Activated T-helper 2 cell treated with anti-CD3 and anti-CD28 coated beads, Interferon-gamma antibody, Interleukin-2, Interleukin-4, amounts not matched to agents 10 μg/mL and 5 μg/mL and 100 μg/mL, durations not matched to agents 14 hours and 24 hours and 36 hours (primary cell): ENCODE measurements at regions of chr11 and their contacts with region 1.

Region 1: GRCh38 chr11:122853971-122854446 is 15.7 kb downstream of the CRTAM start:
- DNase-seq: no peak
- H3K4me3 Mint-ChIP-seq: no peak overlapping the region
- H3K27ac Mint-ChIP-seq: no peak overlapping the region
- H3K4me1 Mint-ChIP-seq: peaks cover 52% of the 10 kb centered on the region
- H3K27me3 Mint-ChIP-seq: peaks cover 5% of the 10 kb centered on the region

Region 2: GRCh38 chr11:122578168-122578825 is 275.7 kb before region 1 on chr11:
- intact Hi-C with region 1: loop called (anchors 1 kb)
- DNase-seq: no peak
- H3K4me3 Mint-ChIP-seq: no peak overlapping the region
- H3K27ac Mint-ChIP-seq: no peak overlapping the region
- H3K4me1 Mint-ChIP-seq: peaks cover 11% of the 10 kb centered on the region
- H3K27me3 Mint-ChIP-seq: no peaks in the 10 kb centered on the region

Region 3: DNA sequence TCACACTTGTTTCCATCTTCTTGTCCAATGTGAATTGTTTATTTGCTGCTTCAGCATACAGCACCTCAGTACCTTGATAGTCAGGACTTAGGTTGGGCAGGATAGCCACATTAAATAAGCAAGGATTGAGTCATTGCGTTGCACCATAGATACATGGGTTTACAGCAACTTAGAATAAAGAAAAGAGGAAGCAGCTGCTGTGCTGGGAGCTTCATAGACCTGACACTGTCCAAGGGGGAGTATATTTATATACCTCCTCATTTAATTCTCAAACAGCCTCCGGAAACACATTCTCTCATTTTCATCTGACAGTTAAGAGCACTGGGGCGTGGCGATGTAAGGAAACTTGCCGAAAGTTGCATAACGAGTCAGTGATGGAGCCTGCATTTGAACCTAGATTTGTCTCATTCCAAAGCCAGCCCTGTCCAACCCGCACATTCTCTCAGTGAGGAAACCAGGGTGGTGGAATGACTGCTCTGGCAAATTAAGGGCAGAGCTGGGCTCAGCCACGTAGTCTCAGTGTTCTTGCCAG is 156.3 kb before region 1 on chr11:
- intact Hi-C with region 1: loop called (anchors 1 kb)
- DNase-seq: peak; percentile 38
- H3K4me3 Mint-ChIP-seq: peak overlapping the region; percentile 68
- H3K27ac Mint-ChIP-seq: peak overlapping the region; percentile 88
- H3K4me1 Mint-ChIP-seq: peaks cover 53% of the 10 kb centered on the region
- H3K27me3 Mint-ChIP-seq: no peaks in the 10 kb centered on the region

Region 4: GRCh38 chr11:122743949-122744348 is 110.1 kb before region 1 on chr11:
- intact Hi-C with region 1: loop called (anchors 1 kb)
- DNase-seq: peak; percentile 75
- H3K4me3 Mint-ChIP-seq: no peak overlapping the region
- H3K27ac Mint-ChIP-seq: no peak overlapping the region
- H3K4me1 Mint-ChIP-seq: peaks cover 40% of the 10 kb centered on the region
- H3K27me3 Mint-ChIP-seq: peaks cover 10% of the 10 kb centered on the region

Region 5: DNA sequence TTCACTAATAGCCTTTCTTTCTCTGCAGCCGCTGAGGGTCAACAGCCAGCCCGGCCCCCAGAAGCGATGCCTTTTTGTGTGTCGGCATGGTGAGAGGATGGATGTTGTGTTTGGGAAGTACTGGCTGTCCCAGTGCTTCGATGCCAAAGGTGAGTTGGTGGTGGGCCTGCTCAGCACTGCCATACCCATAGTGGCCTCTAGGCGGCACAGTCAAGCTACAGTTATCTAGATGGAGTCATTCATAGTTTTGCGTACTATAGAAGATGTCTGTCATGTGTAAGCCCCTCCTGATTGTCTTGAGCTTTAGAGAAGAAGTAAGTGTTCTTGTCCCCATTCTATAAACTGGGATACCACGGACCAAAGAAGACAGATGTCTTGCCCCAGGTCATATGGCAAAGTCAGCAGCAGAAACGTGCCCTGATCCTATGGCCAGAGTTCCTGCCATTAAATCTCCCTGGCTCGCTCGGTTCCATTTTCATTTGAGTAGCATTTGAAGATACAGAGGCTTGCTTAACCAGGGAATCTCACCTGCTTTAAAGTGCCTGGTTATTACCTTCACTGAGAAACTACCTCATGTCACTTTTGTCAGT is 57.8 kb before region 1 on chr11:
- intact Hi-C with region 1: loop called (anchors 1 kb)
- DNase-seq: peak; percentile 39
- H3K4me3 Mint-ChIP-seq: no peak overlapping the region
- H3K27ac Mint-ChIP-seq: no peak overlapping the region
- H3K4me1 Mint-ChIP-seq: no peaks in the 10 kb centered on the region
- H3K27me3 Mint-ChIP-seq: no peaks in the 10 kb centered on the region

Region 6: DNA sequence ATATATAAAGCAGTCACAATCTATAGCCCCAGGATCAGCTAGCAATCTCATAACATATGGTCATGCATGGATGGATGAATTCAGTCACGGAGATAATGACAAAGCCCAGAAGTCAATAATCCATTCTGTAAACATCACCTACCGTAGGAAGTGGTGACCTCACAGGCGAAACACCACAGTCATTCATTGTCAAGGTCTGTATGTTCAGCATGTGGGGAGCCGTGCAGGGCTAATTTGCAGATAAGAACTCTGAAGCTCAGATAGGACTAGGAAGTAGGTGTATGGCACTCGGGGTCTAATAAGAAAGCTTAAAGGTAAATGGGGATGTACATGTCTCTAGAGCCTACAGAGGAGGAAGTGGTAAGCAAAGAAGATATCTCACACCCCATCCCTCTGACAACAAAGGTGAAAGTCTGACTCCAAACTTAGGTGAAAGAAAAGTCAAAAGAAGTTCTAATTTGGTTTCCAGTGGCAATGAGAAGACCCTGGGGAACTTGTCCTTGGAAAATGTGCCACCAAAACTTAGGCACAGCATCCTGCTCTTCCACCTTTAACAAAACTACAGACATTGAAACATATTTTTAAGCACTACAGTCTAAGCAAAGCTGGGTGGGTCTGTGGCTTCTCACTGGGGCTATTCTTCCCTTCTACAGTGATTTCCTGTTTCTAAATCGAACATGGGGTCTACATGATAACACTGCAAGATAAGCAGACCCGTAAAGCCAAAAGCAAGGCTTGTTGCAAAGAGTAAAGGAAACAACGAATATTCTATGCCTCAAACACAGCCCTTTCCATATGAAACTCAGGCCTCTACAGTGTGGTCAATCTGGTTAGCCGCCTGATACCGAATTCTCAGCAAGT is 10.5 kb before region 1 on chr11:
- intact Hi-C with region 1: loop called (anchors 1 kb)
- DNase-seq: peak; percentile 42
- H3K4me3 Mint-ChIP-seq: peak overlapping the region; percentile 37
- H3K27ac Mint-ChIP-seq: peak overlapping the region; percentile 91
- H3K4me1 Mint-ChIP-seq: peaks cover 34% of the 10 kb centered on the region
- H3K27me3 Mint-ChIP-seq: no peaks in the 10 kb centered on the region

Region 7: DNA sequence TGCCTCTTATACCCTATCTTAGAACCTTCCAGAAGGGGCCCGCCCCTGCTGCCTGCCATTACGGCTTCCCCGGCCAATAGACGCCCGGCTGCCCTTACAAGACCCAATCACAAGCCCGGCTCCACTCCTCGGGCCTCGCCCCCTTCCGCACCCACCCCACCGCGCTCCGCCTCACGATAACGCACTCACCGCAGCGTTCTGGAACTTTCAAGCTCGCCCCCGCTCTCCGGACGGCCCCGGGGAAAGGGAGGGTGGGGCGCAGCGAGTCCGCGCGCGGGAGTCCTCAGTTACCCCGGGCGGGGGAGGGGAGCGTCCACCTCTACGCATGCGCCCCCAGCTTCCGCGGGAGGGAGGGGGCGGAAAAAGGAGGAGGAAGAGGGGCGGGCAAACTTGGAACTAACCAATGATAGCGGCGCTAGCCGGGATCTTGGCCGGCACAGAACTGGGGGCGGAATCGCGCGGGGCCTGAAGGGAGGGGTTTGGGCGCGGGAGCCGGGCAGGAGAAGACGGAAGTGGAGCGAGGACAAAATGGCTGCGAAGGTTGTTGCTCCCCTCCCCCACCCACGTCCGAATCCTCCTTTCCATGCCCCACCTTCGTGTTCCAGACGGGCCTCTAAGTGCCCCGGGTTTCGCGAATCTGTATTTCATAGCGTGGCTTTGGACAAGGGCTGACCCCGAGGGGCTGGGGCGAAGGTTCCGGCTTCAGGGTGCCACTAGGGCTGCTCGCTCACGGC is 208.3 kb after region 1 on chr11:
- intact Hi-C with region 1: loop called (anchors 2 kb)
- DNase-seq: peak; percentile 99
- H3K4me3 Mint-ChIP-seq: peak overlapping the region; percentile 100
- H3K27ac Mint-ChIP-seq: peak overlapping the region; percentile 98
- H3K4me1 Mint-ChIP-seq: peaks cover 39% of the 10 kb centered on the region
- H3K27me3 Mint-ChIP-seq: no peaks in the 10 kb centered on the region